Activated T-helper 2 cell treated with anti-CD3 and anti-CD28 coated beads, Interferon-gamma antibody, Interleukin-2, Interleukin-4, amounts not matched to agents 10 μg/mL and 5 μg/mL and 100 μg/mL, durations not matched to agents 14 hours and 24 hours and 36 hours (primary cell): ENCODE measurements at regions of chr15 and their contacts with region 1.

Region 1: DNA sequence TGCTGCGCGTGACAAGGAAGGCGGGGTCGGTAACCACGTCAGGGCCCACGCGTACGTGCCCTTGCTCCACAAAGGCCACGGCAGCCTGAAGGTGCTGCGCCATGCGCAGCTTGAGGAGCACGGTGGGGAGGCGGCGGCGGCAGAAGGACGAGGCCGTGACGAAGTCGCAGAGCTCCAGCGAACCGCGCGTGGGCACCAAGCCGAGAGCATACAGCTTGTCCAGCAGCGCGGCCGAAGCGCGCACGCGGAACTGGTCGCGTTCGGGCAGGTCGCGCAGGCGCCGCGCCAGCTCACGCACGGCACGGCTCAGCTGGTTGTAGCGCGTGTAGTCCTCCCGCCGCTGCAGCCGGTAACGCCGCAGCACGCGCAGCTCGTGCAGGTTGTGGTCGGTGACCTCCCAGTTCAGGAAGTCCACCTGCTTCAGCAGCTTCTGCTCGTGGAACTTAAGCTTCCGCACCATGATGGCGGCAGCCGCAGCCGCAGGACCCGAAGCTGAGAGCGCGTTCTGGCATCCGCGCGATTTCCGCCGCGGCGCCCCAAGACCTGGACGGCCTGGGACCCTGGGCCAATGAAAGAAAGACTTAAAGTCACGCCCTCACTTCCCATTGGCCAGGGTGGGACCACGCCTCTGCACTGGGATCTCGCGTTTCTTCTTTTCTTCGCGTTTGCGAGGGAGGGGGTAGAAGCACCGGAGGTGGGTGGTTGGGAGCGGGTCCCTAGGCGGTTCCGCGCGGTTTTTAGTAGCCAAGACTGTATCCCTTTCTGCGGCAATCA is at the start of gene IMP3:
- DNase-seq: peak; percentile 95
- H3K4me3 Mint-ChIP-seq: peak within 1 kb of the TSS; percentile 92
- H3K27ac Mint-ChIP-seq: peak within 1 kb of the TSS; percentile 93
- H3K4me1 Mint-ChIP-seq: peaks cover 31% of the 10 kb centered on the region
- H3K27me3 Mint-ChIP-seq: peaks cover 2% of the 10 kb centered on the region
- total RNA-seq, gene IMP3: 103 and 106 TPM in 2 replicates

Region 2: DNA sequence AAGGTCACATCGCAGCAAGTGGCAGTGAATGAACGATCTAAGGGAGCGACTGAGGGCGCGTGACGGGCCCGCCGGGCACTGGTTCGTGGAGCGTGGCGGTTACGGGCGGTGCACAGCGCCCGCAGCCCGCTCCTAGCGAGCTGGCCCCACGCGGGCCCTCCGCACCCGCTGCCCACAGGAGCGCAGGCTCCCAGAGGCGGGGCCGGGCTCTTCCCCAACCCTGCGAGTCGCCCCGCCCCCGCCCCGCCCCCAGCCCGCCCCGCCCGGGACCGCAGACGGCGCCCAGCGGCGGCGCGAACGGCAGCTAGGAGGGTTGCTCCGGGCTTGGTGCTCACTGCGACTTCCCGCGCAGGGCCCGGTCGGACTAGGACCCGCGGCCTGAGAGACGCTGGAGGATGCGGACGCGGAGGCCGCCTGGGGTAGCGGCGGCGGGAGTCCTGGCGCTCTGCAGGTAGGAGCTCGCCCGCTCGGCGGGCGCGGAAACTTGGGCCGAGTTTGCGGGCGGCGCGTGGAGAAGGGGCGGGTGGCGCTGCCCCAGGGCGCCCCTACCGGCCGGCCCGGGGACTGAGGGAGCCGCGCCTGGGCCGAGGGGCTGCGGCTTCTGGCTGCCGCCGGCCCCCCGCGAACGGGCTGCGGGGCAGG is 438.2 kb before region 1 on chr15 and contains the start of gene C15orf39:
- intact Hi-C with region 1: no loop called
- DNase-seq: peak; percentile 76
- H3K4me3 Mint-ChIP-seq: peak within 1 kb of the TSS; percentile 88
- H3K27ac Mint-ChIP-seq: peak within 1 kb of the TSS; percentile 82
- H3K4me1 Mint-ChIP-seq: peaks cover 51% of the 10 kb centered on the region
- H3K27me3 Mint-ChIP-seq: no peaks in the 10 kb centered on the region
- total RNA-seq, gene C15orf39: 62.4 and 63.5 TPM in 2 replicates

Region 3: DNA sequence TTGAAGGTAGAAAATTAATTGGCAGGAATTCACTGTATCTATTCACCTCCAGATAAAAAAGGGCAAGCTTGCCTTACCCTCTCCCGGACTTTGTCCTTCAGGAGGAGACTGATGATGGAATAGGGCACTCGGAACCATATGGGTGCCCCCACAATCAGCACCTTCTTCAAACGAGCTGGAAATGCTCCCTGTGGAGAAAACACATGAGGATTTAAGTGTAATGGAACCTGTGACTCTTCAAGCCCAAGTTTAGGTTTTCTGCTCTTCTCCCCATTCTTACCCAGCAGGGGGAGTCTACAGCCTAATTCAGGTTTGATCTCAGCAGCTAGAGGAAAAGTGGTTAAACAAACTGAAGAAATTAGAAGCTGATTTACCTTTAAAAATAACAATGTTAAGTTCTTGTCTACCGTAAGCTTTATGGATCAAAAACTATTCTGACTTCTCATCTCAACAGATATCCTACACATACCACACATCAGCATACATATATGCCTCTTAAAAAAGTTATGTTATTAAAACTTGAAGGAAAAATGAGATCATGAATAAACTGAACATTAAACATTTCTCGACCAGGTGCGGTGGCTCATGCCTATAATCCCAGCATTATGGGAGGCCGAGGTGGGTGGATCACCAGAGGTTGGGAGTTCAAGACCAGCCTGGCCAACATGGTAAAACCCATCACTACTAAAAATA is 130.9 kb before region 1 on chr15:
- intact Hi-C with region 1: loop called (anchors 1 kb)
- DNase-seq: no peak
- H3K4me3 Mint-ChIP-seq: no peak overlapping the region
- H3K27ac Mint-ChIP-seq: no peak overlapping the region
- H3K4me1 Mint-ChIP-seq: no peaks in the 10 kb centered on the region
- H3K27me3 Mint-ChIP-seq: no peaks in the 10 kb centered on the region

Region 4: DNA sequence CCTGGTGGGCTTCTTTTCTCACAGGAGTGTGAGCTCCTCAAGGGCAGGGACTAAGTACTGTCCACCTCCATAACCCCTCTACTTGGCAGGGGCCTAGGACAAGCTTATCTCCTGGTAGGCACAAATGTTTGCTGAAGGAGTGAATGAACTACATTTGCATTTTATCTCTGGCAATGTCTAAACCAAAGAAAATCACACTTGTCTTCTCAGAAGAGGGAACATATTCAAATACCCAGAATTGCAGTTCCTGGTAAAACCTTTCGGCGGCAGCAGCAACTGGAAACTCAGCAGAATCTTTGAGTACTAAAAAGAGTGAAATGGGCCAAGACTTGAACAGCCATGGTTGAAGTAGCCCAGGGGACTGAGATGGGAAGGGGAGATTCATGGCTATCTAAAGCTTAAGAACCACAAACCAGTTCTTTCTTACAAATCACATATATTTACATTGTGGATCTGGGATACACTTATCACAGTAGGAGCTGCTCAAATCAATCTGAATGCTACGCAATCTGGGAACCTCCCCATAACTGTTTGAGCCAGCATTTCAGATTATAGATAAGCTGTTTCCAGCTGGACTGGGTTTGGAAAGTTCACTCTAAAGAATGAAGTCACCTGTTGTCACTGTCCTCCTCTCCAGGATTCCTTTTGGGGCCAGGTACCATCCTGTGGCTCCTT is 42.1 kb before region 1 on chr15:
- intact Hi-C with region 1: loop called (anchors 5 kb)
- DNase-seq: peak; percentile 41
- H3K4me3 Mint-ChIP-seq: peak overlapping the region; percentile 37
- H3K27ac Mint-ChIP-seq: peak overlapping the region; percentile 86
- H3K4me1 Mint-ChIP-seq: peaks cover 30% of the 10 kb centered on the region
- H3K27me3 Mint-ChIP-seq: no peaks in the 10 kb centered on the region

Region 5: GRCh38 chr15:75625542-75626347 is 14.2 kb before region 1 on chr15 and contains the start of gene SNUPN:
- intact Hi-C with region 1: loop called (anchors 1 kb)
- DNase-seq: peak; percentile 88
- H3K4me3 Mint-ChIP-seq: peak within 1 kb of the TSS; percentile 92
- H3K27ac Mint-ChIP-seq: peak within 1 kb of the TSS; percentile 97
- H3K4me1 Mint-ChIP-seq: peaks cover 33% of the 10 kb centered on the region
- H3K27me3 Mint-ChIP-seq: no peaks in the 10 kb centered on the region
- total RNA-seq, gene SNUPN: 32.7 and 40.9 TPM in 2 replicates